Right ventricle myocardium superior (tissue), 1 donor: ENCODE measurements at regions of chr9 and their contacts with region 1.

Region 1: DNA sequence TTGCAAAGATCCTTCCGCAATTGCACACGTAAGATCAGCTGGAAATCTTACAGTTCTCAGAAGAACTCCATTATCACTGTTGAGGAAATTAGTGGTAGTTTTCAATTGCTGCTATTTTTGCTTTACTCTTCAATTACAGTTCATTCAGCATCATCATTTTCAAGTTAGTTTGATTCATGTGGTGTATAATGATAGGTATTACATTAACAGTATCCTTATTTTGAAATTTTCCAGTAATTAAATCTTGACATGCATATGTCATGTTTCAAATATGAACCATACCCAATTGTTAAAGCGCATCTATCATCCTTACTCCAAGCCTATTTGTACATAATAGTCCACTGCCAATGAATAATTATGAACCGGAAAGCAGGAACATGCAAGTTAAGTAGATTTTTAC is 60.3 kb downstream of the NR6A1 start:
- DNase-seq: no peak
- ATAC-seq: no peak

Region 2: GRCh38 chr9:124428751-124429529 is 281.8 kb before region 1 on chr9:
- intact Hi-C with region 1: no loop called
- DNase-seq: no peak
- ATAC-seq: no peak

Region 3: DNA sequence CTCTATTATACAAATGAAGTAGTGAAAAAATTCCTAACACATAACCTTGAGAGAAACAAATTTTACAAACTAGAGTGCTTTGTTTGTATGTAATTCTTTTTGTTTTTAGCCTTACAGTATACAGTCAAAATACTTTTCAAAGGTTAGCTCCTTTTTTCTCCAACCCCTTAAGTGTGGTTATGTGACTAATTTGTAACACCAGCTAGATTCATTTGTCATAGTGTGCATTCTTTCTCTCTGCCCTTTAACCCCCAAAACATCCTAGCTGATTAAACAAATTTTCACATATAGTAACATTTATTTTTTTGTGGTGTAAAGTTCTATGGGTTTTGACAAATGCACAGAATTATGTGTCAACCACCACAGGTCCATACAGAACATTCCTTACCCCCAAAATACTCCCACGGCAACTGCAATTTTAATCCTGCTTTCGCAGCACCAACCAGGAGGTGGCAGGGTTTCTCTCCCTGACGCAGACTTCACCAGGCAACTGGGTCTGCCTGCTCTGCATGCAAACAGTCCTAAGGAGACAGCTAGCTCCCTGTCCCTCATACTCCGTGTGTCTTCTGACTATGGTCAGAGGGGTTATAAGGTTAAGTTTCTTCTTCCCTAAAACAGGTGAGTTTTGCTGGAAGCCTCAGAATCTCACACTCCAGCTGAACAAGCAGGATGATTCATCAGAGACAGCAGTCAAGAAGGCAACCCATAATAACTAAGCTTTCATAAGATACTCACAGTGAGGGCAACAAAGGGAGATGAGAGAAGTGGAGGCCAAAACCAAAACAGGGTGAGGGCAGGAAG is 159.1 kb before region 1 on chr9:
- intact Hi-C with region 1: loop called (anchors 5 kb)
- DNase-seq: peak; percentile 46
- ATAC-seq: peak; percentile 81

Region 4: DNA sequence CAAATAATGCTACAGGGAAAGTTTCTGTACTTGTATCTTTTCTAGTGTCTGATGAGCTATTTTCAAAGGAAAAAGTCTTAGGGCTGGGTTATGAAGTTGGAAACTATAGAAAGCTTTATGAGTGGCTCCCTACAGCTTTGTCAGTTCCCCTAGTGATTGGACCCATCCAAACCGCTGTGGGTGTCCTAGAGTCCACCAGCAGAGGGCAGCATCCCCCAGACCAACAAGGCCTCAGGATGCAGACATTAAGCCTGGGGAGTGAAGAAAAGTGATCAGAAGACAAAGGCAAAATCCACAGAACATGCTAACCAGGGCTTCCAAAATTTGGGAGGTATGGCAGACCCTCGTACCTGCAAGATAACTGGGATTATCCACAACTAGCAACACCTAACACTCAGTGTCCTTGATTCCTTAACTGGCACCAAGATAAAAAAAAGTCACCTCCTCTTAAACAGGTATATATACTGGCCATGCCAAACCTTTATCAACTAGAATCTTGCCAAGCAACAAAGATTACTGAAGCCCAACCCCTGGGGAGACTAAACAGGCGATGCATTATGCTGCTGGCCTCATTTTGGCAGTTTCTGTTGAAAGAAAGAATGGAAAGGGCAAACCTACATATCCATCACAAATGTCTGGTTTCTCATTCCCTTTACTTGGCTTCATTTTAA is 93.2 kb before region 1 on chr9:
- intact Hi-C with region 1: loop called (anchors 2 kb)
- DNase-seq: peak; percentile 84
- ATAC-seq: peak; percentile 93